K562 (cell line): ENCODE measurements at regions of chr6 and their contacts with region 1.

Region 1: DNA sequence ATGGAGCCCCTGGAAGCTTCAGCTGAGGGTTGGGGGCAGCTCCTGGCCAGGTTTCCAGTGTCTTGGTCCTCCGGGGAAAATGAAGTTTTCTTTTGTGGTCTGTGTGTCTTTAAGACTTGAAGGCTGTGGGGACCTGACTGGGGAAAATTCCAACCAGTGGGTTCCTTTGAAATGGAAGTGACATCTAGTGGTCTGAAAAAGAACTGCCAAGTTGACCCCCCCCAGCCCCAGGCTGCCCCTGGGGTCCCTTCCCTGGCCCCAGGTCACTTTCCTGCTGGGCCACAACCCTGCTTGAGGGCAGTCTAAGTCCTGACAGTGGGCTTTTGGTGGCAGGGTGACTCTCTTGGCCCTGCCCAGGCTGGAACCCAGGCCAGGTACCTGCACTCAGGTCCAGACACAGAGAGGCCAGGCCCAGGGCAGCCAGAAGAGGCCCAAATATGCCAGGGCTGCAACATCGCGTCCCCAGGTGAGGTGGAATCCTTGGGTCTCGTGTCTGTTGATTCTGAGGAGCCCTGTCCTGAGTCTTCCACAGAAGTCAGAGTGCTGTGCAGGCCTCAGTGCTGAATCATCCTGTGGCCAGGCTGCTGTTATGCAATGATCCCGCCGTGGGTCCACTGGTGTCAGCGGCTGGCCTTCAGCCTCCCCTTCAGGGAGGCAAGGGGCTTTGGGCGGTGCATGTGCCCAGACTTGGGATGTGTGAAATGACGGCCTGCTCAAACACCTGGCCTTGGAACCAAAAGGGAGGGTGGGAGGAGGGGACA is 68.4 kb downstream of the VEGFA start:
- DNase-seq: peak; percentile 73 to 84 (median 78)
- ATAC-seq: peak; percentile 87
- H3K4me3 ChIP-seq: no peak overlapping the region
- H3K27ac ChIP-seq: peak overlapping the region; percentile 44; the same call in 2 of the 3 replicates
- H3K4me1 ChIP-seq: peaks cover 30 to 38% of the 10 kb centered on the region in 2 experiments
- H3K27me3 ChIP-seq: peaks cover 5 to 12% of the 10 kb centered on the region in 2 experiments; a peak in 4 of 5 replicates
- CTCF ChIP-seq: peak; percentile 73 to 88 (median 81)
- EP300 ChIP-seq: 0 out of 2 replicates have a peak, but pooled peaks have one; percentile 28
- POLR2A ChIP-seq: no peak
- RAD21 ChIP-seq: peak; percentile 66 to 76

Region 2: DNA sequence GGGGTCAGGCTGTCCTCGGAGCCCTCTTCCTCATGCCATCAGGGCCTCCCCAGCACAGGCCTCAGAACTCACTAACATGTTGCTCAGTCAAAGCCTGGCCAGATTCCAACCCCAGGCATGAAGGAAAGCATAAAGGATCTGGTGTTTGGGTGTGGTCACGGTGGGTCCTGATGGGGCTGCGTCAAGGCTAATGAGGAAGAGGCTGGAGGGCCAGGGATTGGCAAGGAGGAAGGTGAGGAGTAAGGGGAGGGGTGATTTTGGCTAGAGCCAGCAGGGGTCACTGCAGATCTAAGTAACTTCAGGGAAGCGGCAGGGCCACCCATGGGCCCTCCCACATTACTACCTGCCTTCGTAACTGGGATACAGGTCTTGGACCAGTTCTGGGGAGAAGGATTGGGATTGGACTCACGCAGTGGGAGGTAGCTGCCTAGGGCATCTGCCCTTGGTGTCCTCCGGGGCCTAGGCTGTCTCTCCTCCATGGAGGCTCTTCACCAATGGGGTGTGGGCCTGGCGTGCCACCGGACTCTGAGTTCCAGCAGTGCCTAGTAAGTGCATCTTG is 114.6 kb before region 1 on chr6:
- CTCF ChIA-PET with region 1: no interaction called
- POLR2A ChIA-PET with region 1: no interaction called
- in situ Hi-C with region 1: no loop called
- intact Hi-C with region 1: loop called (anchors 2 kb)
- DNase-seq: peak; percentile 91 to 94 (median 93)
- ATAC-seq: peak; percentile 87
- H3K4me3 ChIP-seq: no peak overlapping the region
- H3K27ac ChIP-seq: peak overlapping the region; percentile 68; the same call in 1 of the 3 replicates
- H3K4me1 ChIP-seq: peaks cover 25 to 31% of the 10 kb centered on the region in 2 experiments
- H3K27me3 ChIP-seq: no peaks in the 10 kb centered on the region; a peak in 1 of 5 replicates
- CTCF ChIP-seq: peak; percentile 91 to 98 (median 97)
- EP300 ChIP-seq: 0 out of 2 replicates have a peak, but pooled peaks have one; percentile 2
- POLR2A ChIP-seq: no peak
- RAD21 ChIP-seq: peak; percentile 93 to 97

Region 3: DNA sequence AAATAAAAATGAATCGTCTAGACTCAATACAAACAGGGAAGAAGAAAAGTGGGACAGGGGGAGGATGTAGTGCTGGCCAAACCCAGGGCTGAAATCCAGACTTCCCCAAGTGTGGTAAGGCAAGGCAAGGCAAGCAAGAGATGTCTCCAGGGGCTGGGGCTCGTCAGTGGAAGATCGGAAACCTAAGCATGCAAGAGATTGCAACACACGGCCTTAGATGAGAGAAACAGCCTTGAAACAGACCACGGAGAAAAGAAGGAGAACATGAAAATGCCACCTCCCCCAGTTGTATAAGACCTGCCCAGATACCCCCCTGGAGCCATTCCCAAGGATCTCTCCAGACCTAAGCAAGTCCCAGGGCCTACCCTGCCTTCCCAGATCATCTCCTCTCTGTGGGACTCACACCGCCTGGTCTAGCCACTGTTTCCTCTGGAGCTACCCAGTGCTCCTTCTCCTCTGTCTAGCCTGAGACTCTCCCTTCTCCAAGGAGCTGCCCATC is 48.4 kb before region 1 on chr6:
- CTCF ChIA-PET with region 1: no interaction called
- POLR2A ChIA-PET with region 1: interaction called, 4 read pairs
- in situ Hi-C with region 1: no loop called
- intact Hi-C with region 1: loop called (anchors 5 kb)
- DNase-seq: peak in 1 of 4 experiments; percentile 18
- ATAC-seq: no peak; the same call in 2 of the 3 replicates
- H3K4me3 ChIP-seq: no peak overlapping the region
- H3K27ac ChIP-seq: no peak overlapping the region
- H3K4me1 ChIP-seq: peaks cover 6 to 14% of the 10 kb centered on the region in 2 experiments; a peak in 3 of 5 replicates
- H3K27me3 ChIP-seq: no peaks in the 10 kb centered on the region
- CTCF ChIP-seq: no peak
- EP300 ChIP-seq: no peak
- POLR2A ChIP-seq: no peak
- RAD21 ChIP-seq: no peak